HEK293T (cell line): ENCODE measurements at regions of chr10 and their contacts with region 1.

Region 1: DNA sequence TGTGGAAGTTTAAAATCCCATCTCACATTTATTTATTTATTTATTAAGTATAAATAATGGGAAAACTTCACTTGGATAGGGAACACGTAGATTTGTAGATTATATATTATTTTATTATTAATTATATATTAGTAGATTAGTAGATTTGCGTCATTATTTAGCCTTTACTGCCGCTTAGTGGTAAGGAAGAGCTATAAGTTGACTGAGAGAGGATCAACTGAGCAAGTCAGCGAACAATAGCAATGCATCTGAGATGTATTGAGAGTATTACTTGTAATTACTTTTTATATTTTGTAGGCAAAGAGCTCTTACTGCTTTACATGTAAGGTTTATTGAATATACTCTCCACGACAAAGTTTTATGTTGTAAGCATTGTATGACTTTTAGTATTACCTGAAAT is 244.5 kb upstream of the ANKRD30A start:
- DNase-seq: peak; percentile 9

Region 2: GRCh38 chr10:35613597-35614226 is 1267.2 kb before region 1 on chr10:
- CTCF ChIA-PET with region 1: interaction called, 16 read pairs
- POLR2A ChIA-PET with region 1: no interaction called
- DNase-seq: peak; percentile 15